ENCODE measurements at regions of chr2 and their contacts with region 1.

Region 1: GRCh38 chr2:129923265-129924091 is 56.0 kb upstream of the RAB6C start:
- DNase-seq: peak; percentile 68
- ATAC-seq: peak; percentile 70
- H3K4me3 ChIP-seq: no peak overlapping the region
- H3K27ac ChIP-seq: no peak overlapping the region
- H3K4me1 ChIP-seq: no peaks in the 10 kb centered on the region
- H3K27me3 ChIP-seq: peaks cover 30% of the 10 kb centered on the region
- CTCF ChIP-seq: peak; percentile 56

Region 2: GRCh38 chr2:128187032-128187654 is 1736.3 kb before region 1 on chr2:
- CTCF ChIA-PET with region 1: no interaction called
- POLR2A ChIA-PET with region 1: no interaction called
- intact Hi-C with region 1: loop called (anchors 10 kb)
- DNase-seq: peak; percentile 27
- ATAC-seq: peak; percentile 38; the same call in 1 of the 2 replicates
- H3K4me3 ChIP-seq: no peak overlapping the region
- H3K27ac ChIP-seq: peak overlapping the region; percentile 27; the same call in 1 of the 2 replicates
- H3K4me1 ChIP-seq: no peaks in the 10 kb centered on the region
- H3K27me3 ChIP-seq: no peaks in the 10 kb centered on the region
- CTCF ChIP-seq: no peak